K562 (cell line): ENCODE measurements at regions of chr22 and their contacts with region 1.

Region 1: DNA sequence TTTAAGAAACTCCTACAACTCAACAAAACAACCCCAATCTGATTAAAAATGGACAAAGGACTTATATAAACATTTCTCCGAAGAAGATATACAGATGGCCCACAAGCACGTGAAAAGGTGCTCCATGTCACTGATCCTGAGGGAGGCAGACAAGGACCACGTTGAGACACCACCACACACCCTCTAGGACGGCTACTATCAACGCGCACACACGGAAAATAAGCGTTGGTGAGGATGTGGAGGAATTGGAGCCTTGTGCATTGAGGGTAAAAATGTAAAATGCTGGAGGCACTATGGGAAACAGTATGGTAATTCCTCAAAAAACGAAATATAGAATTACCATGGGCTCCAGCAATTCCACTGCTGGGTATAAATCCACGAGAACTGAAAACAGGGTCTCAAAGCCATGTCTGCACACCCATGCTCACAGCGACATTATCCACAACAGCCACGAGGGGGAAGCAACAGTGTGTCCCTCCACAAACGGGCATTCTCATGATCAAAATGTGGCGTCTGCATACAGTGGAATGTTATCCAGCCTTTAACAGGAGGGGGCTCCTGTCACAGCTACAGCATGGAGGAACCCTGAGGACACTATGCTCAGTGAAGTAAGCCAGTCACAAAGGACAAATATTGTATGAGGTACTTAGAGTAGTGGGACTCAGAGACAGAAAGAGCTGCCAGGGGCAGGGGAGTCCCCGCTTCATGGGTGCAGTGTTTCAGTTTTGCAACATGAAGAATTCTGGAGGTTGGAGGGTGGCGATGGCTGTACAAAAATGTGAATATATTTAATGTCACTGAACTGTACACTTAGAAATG is 22.5 kb downstream of the YPEL1 start:
- DNase-seq: peak; percentile 99
- ATAC-seq: peak; percentile 96
- H3K4me3 ChIP-seq: peak overlapping the region; percentile 5; the same call in 1 of the 2 replicates
- H3K27ac ChIP-seq: no peak overlapping the region; the same call in 2 of the 3 replicates
- H3K4me1 ChIP-seq: peaks cover 9 to 14% of the 10 kb centered on the region in 2 experiments; a peak in 4 of 5 replicates
- H3K27me3 ChIP-seq: peaks cover 41 to 71% of the 10 kb centered on the region in 2 experiments
- CTCF ChIP-seq: peak in 1 of 3 experiments; percentile 98; a peak in 2 of 6 replicates
- EP300 ChIP-seq: peak; percentile 64
- POLR2A ChIP-seq: no peak
- RAD21 ChIP-seq: no peak

Region 2: GRCh38 chr22:21612865-21613265 is 100.2 kb before region 1 on chr22:
- CTCF ChIA-PET with region 1: no interaction called
- POLR2A ChIA-PET with region 1: no interaction called
- in situ Hi-C with region 1: no loop called
- intact Hi-C with region 1: no loop called
- DNase-seq: peak in 3 of 4 experiments; percentile 35 to 75 (median 71)
- ATAC-seq: peak; percentile 7; the same call in 2 of the 3 replicates
- H3K4me3 ChIP-seq: no peak overlapping the region
- H3K27ac ChIP-seq: no peak overlapping the region
- H3K4me1 ChIP-seq: peaks cover 0 to 4% of the 10 kb centered on the region in 2 experiments; a peak in 4 of 5 replicates
- H3K27me3 ChIP-seq: no peaks in the 10 kb centered on the region
- CTCF ChIP-seq: no peak
- EP300 ChIP-seq: no peak
- POLR2A ChIP-seq: no peak
- RAD21 ChIP-seq: no peak

Region 3: DNA sequence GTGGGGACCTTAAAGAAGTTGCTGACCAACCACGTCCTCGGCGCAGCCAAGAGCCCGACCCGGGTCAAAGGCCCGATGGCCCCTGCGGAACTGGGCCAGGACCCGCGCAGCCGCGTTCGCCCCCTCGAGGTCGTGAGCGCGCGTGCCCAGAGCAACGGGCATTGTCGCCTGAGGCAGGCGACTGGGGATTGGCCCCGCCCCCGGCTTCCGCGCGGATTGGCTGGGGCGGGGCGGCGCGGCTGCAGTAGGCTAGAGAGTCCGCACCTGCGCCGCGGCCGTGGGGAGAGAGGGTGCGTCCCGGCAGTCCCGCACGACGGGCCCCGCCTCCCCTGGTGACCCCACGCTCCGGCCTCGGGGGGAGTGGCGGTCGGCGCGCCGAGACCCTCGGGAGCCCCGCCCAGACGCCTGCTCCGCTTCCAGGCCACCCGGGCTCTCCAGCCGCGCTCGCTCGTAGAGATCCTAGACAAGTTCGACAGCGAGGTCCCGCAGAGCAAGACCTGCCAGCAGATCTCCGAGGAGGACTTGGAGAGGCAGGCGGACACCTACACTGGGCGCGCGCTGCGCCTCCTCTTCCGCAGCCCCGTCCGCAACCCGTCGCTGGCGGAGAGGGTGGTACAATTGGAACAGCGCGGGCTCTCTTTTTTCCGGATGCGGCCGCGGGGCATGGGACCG is 55.6 kb before region 1 on chr22:
- CTCF ChIA-PET with region 1: interaction called, 4 read pairs
- POLR2A ChIA-PET with region 1: interaction called, 6 read pairs
- in situ Hi-C with region 1: no loop called
- intact Hi-C with region 1: loop called (anchors 1 kb)
- DNase-seq: peak; percentile 100
- ATAC-seq: peak; percentile 95
- H3K4me3 ChIP-seq: peak overlapping the region; percentile 47
- H3K27ac ChIP-seq: peak overlapping the region; percentile 47
- H3K4me1 ChIP-seq: peaks cover 21 to 42% of the 10 kb centered on the region in 2 experiments
- H3K27me3 ChIP-seq: no peaks in the 10 kb centered on the region
- CTCF ChIP-seq: peak in 2 of 3 experiments; percentile 79 to 89; a peak in 4 of 6 replicates
- EP300 ChIP-seq: peak; percentile 19; the same call in 1 of the 2 replicates
- POLR2A ChIP-seq: no peak
- RAD21 ChIP-seq: no peak

Region 4: DNA sequence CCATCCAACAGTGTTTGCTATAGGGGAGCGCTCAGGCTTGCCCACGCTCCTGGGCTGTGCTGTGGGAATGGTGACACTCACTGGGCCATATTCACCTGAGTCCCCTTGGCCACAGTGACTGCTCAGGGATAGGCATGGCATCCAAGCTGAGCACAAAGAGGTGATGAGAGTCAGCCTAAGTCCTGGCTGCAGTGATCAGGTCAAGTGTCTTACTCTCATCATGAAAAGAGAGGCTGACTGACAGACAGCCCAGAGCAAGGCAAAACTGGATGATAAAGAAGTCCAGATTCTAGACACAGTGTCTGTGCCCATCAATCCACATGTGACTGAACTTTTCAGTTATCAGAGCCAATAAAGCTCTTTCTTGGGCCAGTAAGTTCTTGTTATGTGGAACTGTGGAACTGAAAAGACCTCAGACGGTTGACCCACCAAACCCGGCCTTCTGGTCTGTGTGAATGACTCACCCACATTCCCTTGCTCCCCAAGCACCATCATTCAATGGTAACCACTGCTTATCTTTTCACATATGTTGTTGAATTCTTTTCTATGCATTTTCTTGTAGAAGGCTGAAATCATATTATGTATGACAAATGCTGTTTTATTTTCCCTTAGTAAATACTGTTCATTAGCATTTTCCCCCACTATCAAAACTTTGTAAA is 65.7 kb after region 1 on chr22:
- CTCF ChIA-PET with region 1: interaction called, 10 read pairs
- POLR2A ChIA-PET with region 1: no interaction called
- in situ Hi-C with region 1: no loop called
- intact Hi-C with region 1: loop called (anchors 5 kb)
- DNase-seq: peak; percentile 84 to 90 (median 88)
- ATAC-seq: peak; percentile 61
- H3K4me3 ChIP-seq: no peak overlapping the region
- H3K27ac ChIP-seq: peak overlapping the region; percentile 7; the same call in 2 of the 3 replicates
- H3K4me1 ChIP-seq: peaks cover 0 to 12% of the 10 kb centered on the region in 2 experiments; a peak in 2 of 5 replicates
- H3K27me3 ChIP-seq: no peaks in the 10 kb centered on the region
- CTCF ChIP-seq: no peak
- EP300 ChIP-seq: peak; percentile 30; the same call in 1 of the 2 replicates
- POLR2A ChIP-seq: no peak
- RAD21 ChIP-seq: no peak

Region 5: DNA sequence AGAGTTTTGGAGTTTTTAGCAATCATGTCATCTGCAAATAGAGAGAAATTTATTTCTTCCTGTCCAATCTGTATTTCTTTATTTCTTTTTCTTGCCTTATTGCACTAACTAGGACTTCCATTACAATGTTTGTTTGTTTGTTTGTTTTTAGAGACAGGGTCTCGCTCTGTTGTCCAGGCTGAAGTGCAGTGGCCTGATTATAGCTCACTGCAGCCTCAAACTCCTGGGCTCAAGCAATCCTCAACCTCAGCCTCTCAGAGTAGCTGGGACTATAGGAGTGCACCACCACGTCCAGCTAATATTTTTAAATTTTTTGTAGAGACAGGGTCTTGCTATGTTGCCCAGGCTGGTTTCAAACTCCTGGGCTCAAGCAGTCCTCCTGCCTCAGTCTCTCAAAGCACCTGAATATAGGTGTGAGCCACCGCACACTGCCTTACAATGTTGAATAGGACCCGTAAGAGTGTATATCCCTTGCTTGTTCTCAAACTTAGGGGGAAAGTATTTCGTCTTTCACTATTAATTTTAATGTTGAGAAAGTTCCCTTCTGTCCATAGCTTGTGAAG is 183.9 kb after region 1 on chr22:
- CTCF ChIA-PET with region 1: no interaction called
- POLR2A ChIA-PET with region 1: interaction called, 3 read pairs
- in situ Hi-C with region 1: no loop called
- intact Hi-C with region 1: loop called (anchors 5 kb)
- DNase-seq: no peak
- ATAC-seq: no peak
- H3K4me3 ChIP-seq: no peak overlapping the region
- H3K27ac ChIP-seq: no peak overlapping the region
- H3K4me1 ChIP-seq: no peaks in the 10 kb centered on the region
- H3K27me3 ChIP-seq: peaks cover 15 to 41% of the 10 kb centered on the region in 2 experiments; a peak in 3 of 5 replicates
- CTCF ChIP-seq: no peak
- EP300 ChIP-seq: no peak
- POLR2A ChIP-seq: no peak
- RAD21 ChIP-seq: no peak

Region 6: GRCh38 chr22:21947040-21948014 is 234.2 kb after region 1 on chr22:
- CTCF ChIA-PET with region 1: interaction called, 609 read pairs
- POLR2A ChIA-PET with region 1: interaction called, 12 read pairs
- in situ Hi-C with region 1: loop called (anchors 5 kb)
- intact Hi-C with region 1: loop called (anchors 2 kb)
- DNase-seq: peak; percentile 98 to 100 (median 100)
- ATAC-seq: peak; percentile 84
- H3K4me3 ChIP-seq: no peak overlapping the region; the same call in 1 of the 2 replicates
- H3K27ac ChIP-seq: peak overlapping the region; percentile 52
- H3K4me1 ChIP-seq: peaks cover 35 to 67% of the 10 kb centered on the region in 2 experiments
- H3K27me3 ChIP-seq: no peaks in the 10 kb centered on the region
- CTCF ChIP-seq: peak in 2 of 3 experiments; percentile 98 to 99; a peak in 4 of 6 replicates
- EP300 ChIP-seq: peak; percentile 97
- POLR2A ChIP-seq: no peak
- RAD21 ChIP-seq: no peak

Region 7: DNA sequence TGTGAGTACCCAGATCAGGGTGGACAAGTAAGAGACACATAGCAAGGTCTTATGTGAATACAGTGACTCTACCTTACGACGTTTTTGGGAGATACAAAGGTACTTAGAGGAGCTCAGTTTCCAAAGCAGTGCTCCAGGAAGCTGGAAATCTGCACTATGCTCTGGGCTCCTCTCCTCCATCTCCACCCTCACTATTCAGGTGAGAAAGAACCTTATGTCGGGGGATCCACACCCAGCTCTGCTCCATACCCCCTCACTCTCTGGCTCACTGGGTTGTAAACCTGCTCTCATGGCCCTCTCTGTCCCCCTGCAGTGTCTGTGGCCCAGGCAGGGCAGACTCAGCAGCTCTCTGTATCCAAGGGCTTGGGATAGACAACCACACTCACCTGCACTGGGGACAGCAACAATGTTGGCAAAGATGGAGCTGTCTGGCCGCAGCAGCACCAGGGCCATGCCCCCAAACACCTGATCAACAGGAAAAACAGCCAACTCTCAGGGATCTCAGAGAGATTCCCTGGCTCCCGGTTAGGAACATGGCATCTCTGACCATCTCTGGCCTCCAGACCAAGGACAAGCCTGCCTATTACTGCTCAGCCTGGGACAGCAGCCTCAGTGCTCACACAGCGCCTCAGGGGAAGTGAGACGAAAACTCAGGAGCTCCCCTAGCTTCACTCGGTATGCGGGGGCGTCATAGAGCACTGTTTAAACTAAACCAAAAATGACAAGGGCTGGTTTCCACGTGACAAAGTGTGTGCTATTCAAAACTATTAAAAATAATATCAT is 330.4 kb after region 1 on chr22:
- CTCF ChIA-PET with region 1: no interaction called
- POLR2A ChIA-PET with region 1: no interaction called
- in situ Hi-C with region 1: no loop called
- intact Hi-C with region 1: loop called (anchors 5 kb)
- DNase-seq: peak in 1 of 4 experiments; percentile 63
- ATAC-seq: peak; percentile 72
- H3K4me3 ChIP-seq: no peak overlapping the region
- H3K27ac ChIP-seq: no peak overlapping the region
- H3K4me1 ChIP-seq: peaks cover 0 to 5% of the 10 kb centered on the region in 2 experiments; a peak in 2 of 5 replicates
- H3K27me3 ChIP-seq: peaks cover 28 to 40% of the 10 kb centered on the region in 2 experiments
- CTCF ChIP-seq: no peak
- EP300 ChIP-seq: no peak
- POLR2A ChIP-seq: no peak
- RAD21 ChIP-seq: no peak